MCF 10A (cell line): ENCODE measurements at regions of chr12 and their contacts with region 1.

Region 1: DNA sequence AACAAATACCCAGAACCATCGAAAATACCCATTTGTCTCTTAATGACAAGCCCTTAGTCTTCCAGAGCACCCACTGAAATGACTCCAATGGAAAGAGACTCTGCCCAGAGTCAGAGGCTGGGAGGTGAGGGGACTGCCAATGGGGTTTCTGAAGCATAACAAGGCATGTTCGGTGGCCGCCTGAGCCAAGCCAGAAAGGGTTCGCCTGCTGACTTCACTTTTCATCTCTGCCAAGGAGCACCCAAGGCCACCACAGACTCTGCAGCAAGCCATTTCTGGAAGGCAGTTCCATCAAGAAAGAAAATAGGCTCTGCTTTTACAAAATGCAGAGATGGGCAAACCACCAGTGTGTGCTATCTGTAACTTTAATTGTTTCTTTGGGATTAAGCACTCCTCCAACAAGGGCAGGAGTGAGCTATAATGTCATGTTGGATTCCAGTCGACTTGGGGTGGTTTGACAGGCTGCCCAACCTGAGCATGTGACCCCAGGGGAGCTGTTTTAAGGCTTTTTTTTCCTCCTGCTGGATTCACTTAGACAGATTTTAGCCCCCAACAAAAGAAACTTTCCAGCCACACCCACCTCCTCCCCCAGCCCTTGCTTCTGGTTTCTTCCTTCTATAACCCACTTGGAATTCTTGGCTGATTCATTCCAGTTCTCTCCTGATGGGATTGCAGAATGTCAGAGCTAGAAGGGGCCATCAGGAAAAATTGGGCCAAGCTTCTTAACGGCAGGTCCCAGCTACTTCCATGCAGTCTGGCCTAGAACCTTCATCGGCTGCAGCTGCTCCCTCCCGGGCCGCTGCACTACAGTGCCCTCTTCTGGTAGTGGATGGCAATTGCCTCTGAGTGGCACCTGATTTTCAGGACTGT is 24.1 kb downstream of the CKAP4 start:
- DNase-seq: peak; percentile 69
- H3K4me3 Mint-ChIP-seq: no peak overlapping the region
- H3K27ac Mint-ChIP-seq: no peak overlapping the region
- H3K4me1 Mint-ChIP-seq: peaks cover 15% of the 10 kb centered on the region
- H3K27me3 Mint-ChIP-seq: no peaks in the 10 kb centered on the region
- CTCF ChIP-seq: peak; percentile 93

Region 2: GRCh38 chr12:106123551-106124081 is 100.1 kb before region 1 on chr12:
- CTCF ChIA-PET with region 1: no interaction called
- POLR2A ChIA-PET with region 1: no interaction called
- intact Hi-C with region 1: no loop called
- DNase-seq: no peak
- H3K4me3 Mint-ChIP-seq: no peak overlapping the region
- H3K27ac Mint-ChIP-seq: peak overlapping the region; percentile 31
- H3K4me1 Mint-ChIP-seq: peaks cover 22% of the 10 kb centered on the region
- H3K27me3 Mint-ChIP-seq: no peaks in the 10 kb centered on the region
- CTCF ChIP-seq: no peak

Region 3: DNA sequence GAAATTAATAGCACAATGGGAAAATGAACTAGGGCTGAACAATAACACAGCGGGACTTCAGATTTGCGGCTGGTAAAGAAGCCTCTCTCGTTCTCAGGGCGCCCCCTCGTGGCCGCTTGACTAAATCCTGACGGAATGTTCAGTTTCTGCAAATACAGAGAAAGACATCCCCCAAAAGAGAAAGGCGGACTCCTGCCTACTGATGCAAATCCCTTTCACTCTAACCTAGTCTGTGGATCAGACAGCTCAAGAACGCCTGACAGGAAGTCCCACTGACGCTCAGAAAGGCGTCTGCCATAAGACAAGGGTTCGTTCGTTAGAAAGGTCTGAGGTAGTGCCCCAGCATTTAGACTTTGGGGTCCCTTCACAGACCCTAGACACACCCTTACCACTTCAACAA is 87.5 kb before region 1 on chr12:
- CTCF ChIA-PET with region 1: interaction called, 10 read pairs
- POLR2A ChIA-PET with region 1: interaction called, 4 read pairs
- intact Hi-C with region 1: loop called (anchors 5 kb)
- DNase-seq: peak; percentile 86
- H3K4me3 Mint-ChIP-seq: peak overlapping the region; percentile 69
- H3K27ac Mint-ChIP-seq: no peak overlapping the region
- H3K4me1 Mint-ChIP-seq: peaks cover 64% of the 10 kb centered on the region
- H3K27me3 Mint-ChIP-seq: no peaks in the 10 kb centered on the region
- CTCF ChIP-seq: peak; percentile 74

Region 4: GRCh38 chr12:106247674-106248311 is 24.1 kb after region 1 on chr12 and contains the start of gene CKAP4:
- CTCF ChIA-PET with region 1: interaction called, 18 read pairs
- POLR2A ChIA-PET with region 1: interaction called, 29 read pairs
- intact Hi-C with region 1: loop called (anchors 1 kb)
- DNase-seq: peak; percentile 72
- H3K4me3 Mint-ChIP-seq: peak within 1 kb of the TSS; percentile 76
- H3K27ac Mint-ChIP-seq: peak within 1 kb of the TSS; percentile 23
- H3K4me1 Mint-ChIP-seq: peaks cover 23% of the 10 kb centered on the region
- H3K27me3 Mint-ChIP-seq: no peaks in the 10 kb centered on the region
- CTCF ChIP-seq: no peak
- total RNA-seq, gene CKAP4: 101 and 118 TPM in 2 replicates

Region 5: GRCh38 chr12:106282457-106283097 is 58.9 kb after region 1 on chr12:
- CTCF ChIA-PET with region 1: interaction called, 76 read pairs
- POLR2A ChIA-PET with region 1: interaction called, 17 read pairs
- intact Hi-C with region 1: loop called (anchors 1 kb)
- DNase-seq: peak; percentile 83
- H3K4me3 Mint-ChIP-seq: no peak overlapping the region
- H3K27ac Mint-ChIP-seq: no peak overlapping the region
- H3K4me1 Mint-ChIP-seq: peaks cover 15% of the 10 kb centered on the region
- H3K27me3 Mint-ChIP-seq: no peaks in the 10 kb centered on the region
- CTCF ChIP-seq: peak; percentile 76

Region 6: GRCh38 chr12:106345739-106346138 is 122.0 kb after region 1 on chr12:
- CTCF ChIA-PET with region 1: interaction called, 60 read pairs
- POLR2A ChIA-PET with region 1: interaction called, 25 read pairs
- intact Hi-C with region 1: loop called (anchors 1 kb)
- DNase-seq: peak; percentile 85
- H3K4me3 Mint-ChIP-seq: peak overlapping the region; percentile 44
- H3K27ac Mint-ChIP-seq: peak overlapping the region; percentile 83
- H3K4me1 Mint-ChIP-seq: peaks cover 22% of the 10 kb centered on the region
- H3K27me3 Mint-ChIP-seq: no peaks in the 10 kb centered on the region
- CTCF ChIP-seq: peak; percentile 60

Region 7: GRCh38 chr12:106774005-106774807 is 550.5 kb after region 1 on chr12 and contains the start of gene RIC8B:
- CTCF ChIA-PET with region 1: no interaction called
- POLR2A ChIA-PET with region 1: no interaction called
- intact Hi-C with region 1: loop called (anchors 10 kb)
- DNase-seq: peak; percentile 99
- H3K4me3 Mint-ChIP-seq: peak within 1 kb of the TSS; percentile 99
- H3K27ac Mint-ChIP-seq: peak within 1 kb of the TSS; percentile 98
- H3K4me1 Mint-ChIP-seq: peaks cover 17% of the 10 kb centered on the region
- H3K27me3 Mint-ChIP-seq: peaks cover 8% of the 10 kb centered on the region
- CTCF ChIP-seq: no peak
- total RNA-seq, gene RIC8B: 10.0 and 10.8 TPM in 2 replicates

Region 8: GRCh38 chr12:106919910-106920544 is 696.3 kb after region 1 on chr12:
- CTCF ChIA-PET with region 1: interaction called, 4 read pairs
- POLR2A ChIA-PET with region 1: no interaction called
- intact Hi-C with region 1: loop called (anchors 1 kb)
- DNase-seq: peak; percentile 57
- H3K4me3 Mint-ChIP-seq: no peak overlapping the region
- H3K27ac Mint-ChIP-seq: no peak overlapping the region
- H3K4me1 Mint-ChIP-seq: no peaks in the 10 kb centered on the region
- H3K27me3 Mint-ChIP-seq: peaks cover 12% of the 10 kb centered on the region
- CTCF ChIP-seq: peak; percentile 59